ENCODE measurements at regions of chr5 and their contacts with region 1.

Region 1: DNA sequence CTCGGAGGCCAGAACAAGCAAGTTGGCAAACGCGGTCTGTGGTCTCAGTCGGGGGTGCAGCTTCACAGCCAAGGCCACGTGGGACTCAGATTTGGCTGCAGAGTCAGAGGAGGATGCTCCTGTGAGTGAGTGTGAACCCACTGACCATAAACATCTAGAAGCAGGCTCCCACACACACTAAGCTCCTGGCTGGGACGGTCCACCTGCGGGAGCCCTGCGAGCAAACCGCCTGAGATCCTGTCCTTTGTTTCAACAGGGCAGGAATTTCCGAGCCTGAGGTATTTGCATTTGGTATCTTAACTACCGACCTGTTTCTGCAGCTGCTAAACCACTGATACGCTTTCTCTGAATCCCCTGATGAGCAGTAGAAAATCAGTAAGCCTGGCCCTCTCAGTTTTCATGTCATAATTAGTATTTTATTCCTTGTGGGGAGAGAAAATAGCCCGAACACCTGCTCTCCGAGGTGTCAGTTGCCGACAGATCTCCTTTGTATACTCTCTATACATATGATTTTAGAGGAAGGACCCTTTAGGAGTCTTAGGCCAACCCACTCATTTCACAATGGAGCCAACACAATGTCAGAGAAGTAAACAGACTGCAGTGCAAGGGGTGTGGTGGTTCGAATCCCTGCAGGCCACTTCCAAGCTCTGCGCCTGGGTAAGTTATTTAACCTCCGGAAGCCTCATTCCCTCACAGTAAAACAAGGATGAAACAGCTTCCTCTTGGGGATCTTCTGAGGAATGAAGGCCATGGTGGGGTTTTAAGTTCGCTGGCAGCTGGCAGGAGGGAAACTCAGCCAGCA is 40.9 kb upstream of the PWWP2A start:
- DNase-seq: peak; percentile 80
- ATAC-seq: peak; percentile 85
- H3K4me3 Mint-ChIP-seq: peak overlapping the region; percentile 12
- H3K27ac Mint-ChIP-seq: peak overlapping the region; percentile 100
- H3K4me1 Mint-ChIP-seq: peaks cover 52% of the 10 kb centered on the region
- H3K27me3 Mint-ChIP-seq: no peaks in the 10 kb centered on the region
- CTCF ChIP-seq: no peak

Region 2: DNA sequence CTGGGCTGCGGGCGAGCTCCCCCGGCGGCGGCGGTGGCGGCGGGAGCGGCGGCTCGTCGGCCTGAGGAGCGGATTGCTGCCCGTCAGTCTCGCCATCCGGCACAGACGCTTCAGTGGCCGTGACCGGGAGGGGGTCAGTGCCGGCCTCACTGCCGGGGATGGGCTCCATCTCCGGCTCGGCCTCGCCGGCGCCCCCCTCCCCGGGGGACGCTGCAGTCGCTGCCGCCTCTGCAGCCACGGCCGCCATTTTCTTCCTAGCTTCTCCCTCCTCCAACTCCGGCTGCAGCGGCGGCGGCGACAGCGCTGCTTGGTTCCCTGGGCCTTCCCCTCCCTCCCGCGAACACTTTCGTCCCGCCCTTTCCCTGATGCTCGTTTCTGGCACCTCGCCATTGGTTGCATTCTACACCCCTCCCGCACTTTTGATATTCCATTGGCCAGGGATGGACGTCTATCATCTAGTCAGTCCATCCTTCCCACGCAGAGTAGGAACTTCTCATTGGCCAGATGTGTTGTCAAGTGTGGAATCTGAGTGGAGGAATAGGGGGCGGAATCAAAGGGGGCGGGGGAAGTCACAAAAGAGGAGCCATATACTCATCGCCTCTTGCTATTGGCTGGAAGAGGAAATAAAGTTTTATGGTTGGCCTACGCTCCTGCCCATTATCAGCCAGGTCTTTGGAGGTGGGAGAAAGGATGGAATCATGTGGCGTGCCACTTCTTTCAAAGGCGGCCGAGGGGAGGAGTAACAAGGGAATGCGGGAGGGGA is 40.9 kb before region 1 on chr5 and contains the start of gene PWWP2A:
- CTCF ChIA-PET with region 1: no interaction called
- POLR2A ChIA-PET with region 1: interaction called, 11 read pairs
- DNase-seq: peak; percentile 97
- ATAC-seq: peak; percentile 97
- H3K4me3 Mint-ChIP-seq: peak within 1 kb of the TSS; percentile 96
- H3K27ac Mint-ChIP-seq: peak within 1 kb of the TSS; percentile 95
- H3K4me1 Mint-ChIP-seq: peaks cover 18% of the 10 kb centered on the region
- H3K27me3 Mint-ChIP-seq: no peaks in the 10 kb centered on the region
- CTCF ChIP-seq: no peak
- total RNA-seq, gene PWWP2A: 61.1 to 63.8 TPM (median 62.4 TPM) in 3 replicates

Region 3: GRCh38 chr5:160133071-160133917 is 26.9 kb before region 1 on chr5:
- CTCF ChIA-PET with region 1: interaction called, 6 read pairs
- POLR2A ChIA-PET with region 1: interaction called, 16 read pairs
- DNase-seq: peak; percentile 64
- ATAC-seq: peak; percentile 80
- H3K4me3 Mint-ChIP-seq: peak overlapping the region; percentile 53
- H3K27ac Mint-ChIP-seq: peak overlapping the region; percentile 96
- H3K4me1 Mint-ChIP-seq: peaks cover 28% of the 10 kb centered on the region
- H3K27me3 Mint-ChIP-seq: no peaks in the 10 kb centered on the region
- CTCF ChIP-seq: no peak

Region 4: DNA sequence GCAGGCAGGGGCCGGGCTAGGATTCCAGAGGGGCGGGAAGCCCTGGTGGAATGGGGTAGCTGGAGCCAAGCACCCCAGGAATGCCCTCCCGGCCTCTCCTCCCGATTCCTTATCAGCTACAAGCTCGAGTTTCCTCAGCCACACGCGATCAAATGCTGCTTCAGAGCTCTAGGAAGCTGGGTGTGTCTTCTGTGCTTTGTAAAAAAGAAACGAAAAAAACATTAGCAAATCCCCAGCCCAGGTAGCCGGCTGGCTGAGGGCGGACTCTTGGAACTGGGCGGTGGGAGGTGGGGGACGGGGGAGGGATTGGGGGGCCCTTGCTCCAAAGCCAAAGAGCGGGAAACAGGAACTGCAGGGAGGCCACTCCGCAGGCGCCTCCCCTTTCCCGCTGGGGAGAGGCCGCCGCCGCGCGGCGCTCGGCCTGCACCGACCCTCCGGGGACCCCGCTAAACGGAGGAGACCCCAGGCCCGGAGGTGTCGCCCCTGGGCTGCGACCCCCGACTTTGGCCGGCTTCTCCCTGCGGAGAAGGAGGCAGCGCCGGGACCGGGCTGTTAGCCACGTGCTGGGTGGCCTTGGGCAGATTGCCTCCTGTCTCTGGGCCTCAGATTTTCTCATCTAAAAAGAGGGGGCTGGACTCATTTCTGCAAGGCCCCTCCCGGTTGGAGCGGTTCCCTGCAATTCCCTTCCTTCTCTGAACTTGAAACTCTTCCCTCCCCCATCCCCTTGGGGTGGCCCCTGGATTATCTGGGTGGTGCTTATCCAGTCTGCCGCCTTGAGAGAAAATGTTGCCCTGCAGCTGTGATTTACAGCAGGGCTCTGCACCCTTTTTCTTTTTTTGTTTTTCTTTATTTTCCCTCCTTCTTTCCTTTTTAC is 28.2 kb after region 1 on chr5:
- CTCF ChIA-PET with region 1: interaction called, 3 read pairs
- POLR2A ChIA-PET with region 1: interaction called, 19 read pairs
- DNase-seq: peak; percentile 77
- ATAC-seq: peak; percentile 75
- H3K4me3 Mint-ChIP-seq: peak overlapping the region; percentile 57
- H3K27ac Mint-ChIP-seq: peak overlapping the region; percentile 89
- H3K4me1 Mint-ChIP-seq: peaks cover 22% of the 10 kb centered on the region
- H3K27me3 Mint-ChIP-seq: peaks cover 15% of the 10 kb centered on the region
- CTCF ChIP-seq: no peak

Region 5: DNA sequence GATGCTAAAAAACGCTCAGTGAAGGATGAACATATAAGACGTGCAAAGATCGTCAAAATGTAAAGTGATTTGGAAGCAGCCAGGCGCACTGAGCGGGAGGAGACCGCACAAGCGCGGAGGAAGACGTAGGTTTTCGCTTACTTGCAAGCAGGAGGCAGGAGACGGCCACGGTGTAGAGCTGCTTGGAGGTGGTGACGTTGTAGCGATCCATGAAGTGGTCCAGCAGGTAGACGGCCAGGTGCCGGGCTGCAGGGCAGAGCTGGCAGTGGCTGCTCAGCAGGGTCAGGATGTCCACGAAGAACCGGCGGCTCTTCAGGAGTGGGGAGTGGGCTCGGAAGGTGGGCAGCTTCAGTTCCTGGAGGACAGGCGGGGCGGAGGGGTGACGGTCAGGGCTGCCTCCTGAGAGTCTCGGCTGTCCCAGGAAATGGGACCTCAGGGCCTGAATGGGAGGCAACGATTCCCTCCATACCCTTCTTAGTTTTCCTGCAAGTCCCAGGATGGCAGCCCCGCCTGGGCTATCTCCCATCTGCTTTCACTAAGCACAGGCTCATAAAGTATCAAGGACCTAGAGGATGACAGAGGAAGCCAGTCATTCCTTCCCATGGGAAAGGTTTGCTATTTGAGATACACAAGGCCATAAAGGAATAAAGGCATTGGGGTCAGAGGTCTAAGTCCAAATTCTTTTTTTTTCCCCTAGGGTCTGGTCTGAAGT is 120.3 kb after region 1 on chr5:
- CTCF ChIA-PET with region 1: no interaction called
- POLR2A ChIA-PET with region 1: no interaction called
- DNase-seq: no peak
- ATAC-seq: no peak
- H3K4me3 Mint-ChIP-seq: no peak overlapping the region
- H3K27ac Mint-ChIP-seq: peak overlapping the region; percentile 78
- H3K4me1 Mint-ChIP-seq: peaks cover 48% of the 10 kb centered on the region
- H3K27me3 Mint-ChIP-seq: no peaks in the 10 kb centered on the region
- CTCF ChIP-seq: no peak